CD8-positive, alpha-beta T cell (primary cell): ENCODE measurements at regions of chr7 and their contacts with region 1.

Region 1: GRCh38 chr7:95511716-95512260 is 26.0 kb downstream of the ASB4 start:
- DNase-seq: peak in 8 of 9 experiments; percentile 13 to 62 (median 32)
- ATAC-seq: peak; percentile 58
- H3K4me3 ChIP-seq: no peak overlapping the region
- H3K4me3 Mint-ChIP-seq: no peak overlapping the region
- H3K27ac ChIP-seq: no peak overlapping the region
- H3K27ac Mint-ChIP-seq: no peak overlapping the region
- H3K4me1 ChIP-seq: no peaks in the 10 kb centered on the region
- H3K4me1 Mint-ChIP-seq: peaks cover 2% of the 10 kb centered on the region
- H3K27me3 ChIP-seq: no peaks in the 10 kb centered on the region
- H3K27me3 Mint-ChIP-seq: peaks cover 3% of the 10 kb centered on the region
- CTCF ChIP-seq: peak; percentile 64

Region 2: DNA sequence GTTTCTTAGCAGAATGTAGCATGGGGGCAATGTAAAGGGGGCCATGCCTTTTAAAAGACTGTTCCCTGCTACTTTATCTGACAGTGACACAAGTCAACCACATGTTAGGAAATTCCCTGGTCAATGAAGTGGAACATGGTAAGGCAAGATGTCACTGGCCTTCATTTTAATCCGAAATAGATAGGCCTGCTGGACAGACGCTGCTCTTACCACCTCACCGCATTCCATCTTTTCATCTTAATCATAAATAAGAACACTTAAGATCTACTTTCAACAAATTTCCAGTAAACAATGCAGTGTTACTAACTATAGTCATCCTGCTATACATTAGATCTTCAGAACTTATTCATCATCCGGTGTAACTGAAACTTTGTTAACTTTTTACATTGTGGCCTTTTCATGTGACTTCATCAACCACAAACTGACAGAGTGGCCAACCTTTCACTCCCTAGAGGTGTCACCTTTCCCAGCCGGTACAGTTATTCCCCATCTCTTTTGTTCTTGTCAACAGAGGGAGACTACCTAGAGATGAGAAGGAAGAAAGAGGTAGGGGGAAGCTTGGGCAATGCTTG is 10.4 kb before region 1 on chr7:
- CTCF ChIA-PET with region 1: interaction called, 14 read pairs
- POLR2A ChIA-PET with region 1: interaction called, 4 read pairs
- intact Hi-C with region 1: no loop called
- DNase-seq: peak in 2 of 9 experiments; percentile 23 to 49
- ATAC-seq: no peak
- H3K4me3 ChIP-seq: no peak overlapping the region
- H3K4me3 Mint-ChIP-seq: no peak overlapping the region
- H3K27ac ChIP-seq: no peak overlapping the region
- H3K27ac Mint-ChIP-seq: no peak overlapping the region
- H3K4me1 ChIP-seq: no peaks in the 10 kb centered on the region
- H3K4me1 Mint-ChIP-seq: peaks cover 20% of the 10 kb centered on the region
- H3K27me3 ChIP-seq: no peaks in the 10 kb centered on the region
- H3K27me3 Mint-ChIP-seq: no peaks in the 10 kb centered on the region
- CTCF ChIP-seq: no peak

Region 3: GRCh38 chr7:95690367-95690947 is 178.7 kb after region 1 on chr7:
- CTCF ChIA-PET with region 1: interaction called, 3 read pairs
- POLR2A ChIA-PET with region 1: no interaction called
- intact Hi-C with region 1: loop called (anchors 5 kb)
- DNase-seq: peak in 2 of 9 experiments; percentile 7 to 17
- ATAC-seq: peak; percentile 23
- H3K4me3 ChIP-seq: no peak overlapping the region
- H3K4me3 Mint-ChIP-seq: no peak overlapping the region
- H3K27ac ChIP-seq: no peak overlapping the region
- H3K27ac Mint-ChIP-seq: no peak overlapping the region
- H3K4me1 ChIP-seq: no peaks in the 10 kb centered on the region
- H3K4me1 Mint-ChIP-seq: peaks cover 2% of the 10 kb centered on the region
- H3K27me3 ChIP-seq: no peaks in the 10 kb centered on the region
- H3K27me3 Mint-ChIP-seq: peaks cover 2% of the 10 kb centered on the region
- CTCF ChIP-seq: peak; percentile 20